Left cardiac atrium (tissue), 4 donors: ENCODE measurements at regions of chr1 and their contacts with region 1.

Region 1: GRCh38 chr1:17119773-17120480 is 676 bp upstream of the PADI2 start:
- DNase-seq: no peak
- ATAC-seq: peak in 1 of 2 donors; percentile 4

Region 2: GRCh38 chr1:17335821-17336710 is 216.1 kb after region 1 on chr1:
- intact Hi-C with region 1: loop called (anchors 5 to 10 kb)
- DNase-seq: peak; percentile 62
- ATAC-seq: peak in 1 of 2 donors; percentile 57